Activated CD4-positive, alpha-beta memory T cell treated with anti-CD3 and anti-CD28 coated beads for 36 hours (primary cell): ENCODE measurements at regions of chr19 and their contacts with region 1.

Region 1: DNA sequence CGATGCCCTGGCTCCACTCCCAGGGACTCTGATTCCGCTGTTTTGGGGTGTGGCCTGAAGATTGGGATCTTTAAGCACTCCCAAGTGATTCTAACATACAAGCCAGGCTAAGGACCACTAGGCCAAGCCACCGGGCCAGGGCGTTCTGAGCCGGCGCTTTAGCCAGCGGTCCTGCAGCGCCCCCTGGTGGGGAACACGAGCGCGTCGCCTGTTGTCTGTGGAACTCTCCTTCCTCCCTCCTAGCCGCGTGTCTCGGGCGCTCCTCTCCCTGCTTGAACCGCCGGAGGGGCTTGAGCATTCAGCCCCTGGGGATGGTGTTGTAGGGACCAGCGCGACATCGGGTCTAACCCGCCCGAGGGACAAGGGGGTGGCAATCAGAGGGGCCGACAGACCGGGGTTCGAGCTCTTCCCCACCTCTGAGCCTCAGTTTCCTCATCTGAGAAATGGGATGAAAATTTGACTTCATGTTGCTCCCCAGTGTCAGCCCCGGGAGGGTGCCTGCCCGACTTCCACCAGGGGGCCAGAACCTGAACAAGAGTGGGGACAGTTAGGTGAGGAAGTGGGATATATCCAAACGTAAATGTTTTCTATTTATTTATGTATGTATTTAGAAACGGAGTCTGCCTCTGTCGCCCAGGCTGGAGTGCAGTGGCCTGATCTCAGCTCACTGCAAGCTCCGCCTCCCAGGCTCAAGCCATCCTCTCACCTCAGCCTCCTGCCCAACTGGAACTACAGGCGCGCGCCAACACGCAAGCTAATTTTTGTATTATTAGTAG is 18.0 kb upstream of the PNMA8B start:
- DNase-seq: peak; percentile 83
- H3K4me3 Mint-ChIP-seq: no peak overlapping the region
- H3K27ac Mint-ChIP-seq: no peak overlapping the region
- H3K4me1 Mint-ChIP-seq: peaks cover 7% of the 10 kb centered on the region
- H3K27me3 Mint-ChIP-seq: peaks cover 19% of the 10 kb centered on the region

Region 2: GRCh38 chr19:46288896-46289588 is 224.6 kb before region 1 on chr19:
- CTCF ChIA-PET with region 1: no interaction called
- POLR2A ChIA-PET with region 1: no interaction called
- intact Hi-C with region 1: loop called (anchors 10 kb)
- DNase-seq: no peak
- H3K4me3 Mint-ChIP-seq: no peak overlapping the region
- H3K27ac Mint-ChIP-seq: no peak overlapping the region
- H3K4me1 Mint-ChIP-seq: no peaks in the 10 kb centered on the region
- H3K27me3 Mint-ChIP-seq: peaks cover 6% of the 10 kb centered on the region

Region 3: DNA sequence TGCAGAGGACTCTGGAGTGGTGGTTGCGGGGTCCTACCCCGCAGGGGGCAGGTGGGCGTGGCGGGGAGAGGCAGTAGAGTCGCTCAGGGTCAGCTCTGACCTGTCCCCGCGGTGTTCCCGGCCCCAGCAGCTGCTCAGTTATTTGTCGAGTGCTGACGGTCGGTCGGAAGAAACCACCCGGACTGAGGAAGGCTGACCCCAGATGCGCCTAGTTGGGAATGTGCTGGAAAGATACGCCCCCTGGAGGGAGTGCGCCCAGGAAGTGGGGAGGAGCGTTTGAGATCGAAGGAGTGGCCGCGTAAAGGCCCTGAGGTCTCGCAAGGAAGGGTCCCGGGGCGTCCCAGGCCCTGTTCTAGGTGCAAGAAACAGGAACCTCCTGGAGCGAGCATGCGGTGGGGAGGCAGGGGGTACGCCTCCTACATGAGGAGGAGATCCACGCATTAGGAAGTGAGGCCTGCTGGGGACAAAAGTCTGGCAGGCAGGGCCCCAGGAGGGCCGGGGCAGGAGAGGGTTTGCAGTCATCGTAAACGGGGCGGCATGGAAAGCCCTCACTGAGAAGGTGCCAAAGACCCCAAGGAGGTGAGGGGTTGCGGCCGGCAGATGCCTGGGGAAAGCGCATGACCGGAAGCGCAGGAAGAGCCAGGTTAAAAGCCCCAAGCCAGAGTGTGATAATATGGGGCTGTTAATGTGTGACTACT is 109.4 kb before region 1 on chr19:
- CTCF ChIA-PET with region 1: interaction called, 17 read pairs
- POLR2A ChIA-PET with region 1: no interaction called
- intact Hi-C with region 1: no loop called
- DNase-seq: no peak
- H3K4me3 Mint-ChIP-seq: no peak overlapping the region
- H3K27ac Mint-ChIP-seq: no peak overlapping the region
- H3K4me1 Mint-ChIP-seq: peaks cover 15% of the 10 kb centered on the region
- H3K27me3 Mint-ChIP-seq: peaks cover 56% of the 10 kb centered on the region

Region 4: GRCh38 chr19:46529622-46530462 is 16.2 kb after region 1 on chr19:
- CTCF ChIA-PET with region 1: interaction called, 44 read pairs
- POLR2A ChIA-PET with region 1: no interaction called
- intact Hi-C with region 1: no loop called
- DNase-seq: peak; percentile 82
- H3K4me3 Mint-ChIP-seq: no peak overlapping the region
- H3K27ac Mint-ChIP-seq: peak overlapping the region; percentile 42
- H3K4me1 Mint-ChIP-seq: peaks cover 14% of the 10 kb centered on the region
- H3K27me3 Mint-ChIP-seq: peaks cover 2% of the 10 kb centered on the region

Region 5: DNA sequence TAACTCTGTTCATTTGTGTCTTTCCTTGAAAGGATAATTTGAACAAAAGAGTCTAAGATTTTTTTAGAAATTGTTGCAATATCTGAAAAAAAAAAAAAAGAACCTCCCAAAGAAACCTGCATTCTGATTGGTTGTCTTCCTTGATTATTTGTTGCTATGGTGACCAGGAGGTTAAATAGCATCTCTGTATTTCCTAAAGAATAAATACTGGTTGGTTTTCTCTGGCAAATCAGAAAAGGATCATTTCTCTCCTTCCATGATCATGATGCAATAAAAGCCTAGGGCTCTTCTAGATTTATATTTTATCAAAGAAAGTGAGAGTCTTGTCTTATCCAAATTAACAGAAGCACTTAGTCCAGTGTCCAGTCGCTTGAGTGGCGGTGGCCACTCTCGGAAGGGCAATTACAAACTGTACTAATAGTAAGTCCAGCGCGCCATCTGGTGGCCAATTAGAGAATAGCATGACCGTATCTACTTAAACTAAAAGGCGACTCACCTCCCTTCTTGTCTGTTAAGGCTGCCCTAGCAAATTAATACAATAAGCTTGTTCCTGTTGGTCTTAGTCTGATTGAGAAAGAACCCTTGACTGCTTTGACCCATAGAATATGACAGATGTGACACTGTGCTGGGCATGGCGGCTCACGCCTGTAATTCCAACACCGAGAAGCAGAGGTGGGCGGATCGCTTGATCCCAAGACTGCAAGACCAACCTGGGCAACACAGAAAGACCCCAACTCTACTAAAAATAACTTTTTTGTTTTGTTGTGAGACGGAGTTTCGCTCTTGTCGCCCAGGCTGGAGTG is 29.0 kb after region 1 on chr19:
- CTCF ChIA-PET with region 1: interaction called, 12 read pairs
- POLR2A ChIA-PET with region 1: no interaction called
- intact Hi-C with region 1: loop called (anchors 1 kb)
- DNase-seq: peak; percentile 84
- H3K4me3 Mint-ChIP-seq: no peak overlapping the region
- H3K27ac Mint-ChIP-seq: no peak overlapping the region
- H3K4me1 Mint-ChIP-seq: peaks cover 2% of the 10 kb centered on the region
- H3K27me3 Mint-ChIP-seq: no peaks in the 10 kb centered on the region